Motor neuron (in vitro differentiated cells): ENCODE measurements at regions of chr21 and their contacts with region 1.

Region 1: GRCh38 chr21:16117851-16118592 is 388.2 kb downstream of the USP25 start:
- ATAC-seq: peak in 5 of 8 experiments; percentile 16 to 97 (median 63)
- H3K4me3 ChIP-seq: no peak overlapping the region
- H3K27ac ChIP-seq: no peak overlapping the region
- H3K4me1 ChIP-seq: no peaks in the 10 kb centered on the region

Region 2: DNA sequence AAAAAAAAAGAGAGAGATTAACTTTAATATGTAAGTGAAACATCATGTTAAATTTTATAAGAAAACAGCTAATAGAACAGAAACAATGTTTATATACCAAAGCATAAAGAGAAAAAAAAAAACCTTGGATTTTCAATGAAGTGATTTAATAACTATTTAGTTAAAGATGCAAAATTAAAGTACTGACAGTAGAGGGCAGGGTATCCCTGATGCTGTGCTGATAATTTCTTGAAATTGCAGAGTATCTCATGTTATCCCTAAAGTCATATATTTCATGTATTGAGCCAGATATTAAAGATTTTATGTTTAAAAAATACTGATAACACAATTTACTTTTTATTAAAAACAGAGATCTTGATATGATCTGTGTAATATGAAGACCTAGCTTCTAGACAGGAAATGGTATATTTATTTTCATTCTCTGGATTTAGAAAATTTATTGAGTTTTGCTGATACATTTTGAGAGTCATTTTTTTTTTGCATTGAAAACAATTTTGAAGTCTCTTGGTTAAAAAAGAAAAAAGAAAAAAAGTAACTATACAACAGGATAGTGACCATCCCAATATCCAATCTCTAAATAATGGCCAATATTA is 115.1 kb before region 1 on chr21:
- in situ Hi-C with region 1: loop called in 1 of 9 experiments (anchors 25 kb)
- ATAC-seq: peak in 2 of 8 experiments; percentile 39 to 56
- H3K4me3 ChIP-seq: no peak overlapping the region
- H3K27ac ChIP-seq: no peak overlapping the region
- H3K4me1 ChIP-seq: peaks cover 0 to 2% of the 10 kb centered on the region in 2 donors

Region 3: GRCh38 chr21:16211339-16212303 is 93.6 kb after region 1 on chr21:
- in situ Hi-C with region 1: no loop called
- ATAC-seq: peak in 5 of 8 experiments; percentile 51 to 73 (median 53)
- H3K4me3 ChIP-seq: no peak overlapping the region
- H3K27ac ChIP-seq: no peak overlapping the region
- H3K4me1 ChIP-seq: peaks cover 5 to 8% of the 10 kb centered on the region in 2 donors